CD8-positive, alpha-beta memory T cell (primary cell): ENCODE measurements at regions of chr22 and their contacts with region 1.

Region 1: GRCh38 chr22:22884010-22884887 is 3.4 kb upstream of the IGLL5 start:
- DNase-seq: peak; percentile 44 to 81 (median 70)
- H3K4me3 ChIP-seq: no peak overlapping the region
- H3K4me3 Mint-ChIP-seq: no peak overlapping the region
- H3K27ac ChIP-seq: no peak overlapping the region
- H3K27ac Mint-ChIP-seq: peak overlapping the region in 4 of 8 donors; percentile 4 to 77 (median 40)
- H3K4me1 ChIP-seq: no peaks in the 10 kb centered on the region
- H3K4me1 Mint-ChIP-seq: peaks cover 8 to 14% (median 13%) of the 10 kb centered on the region in 3 donors
- H3K27me3 ChIP-seq: no peaks in the 10 kb centered on the region
- H3K27me3 Mint-ChIP-seq: peaks cover 2 to 6% of the 10 kb centered on the region in 2 donors

Region 2: GRCh38 chr22:22692707-22693530 is 191.3 kb before region 1 on chr22:
- CTCF ChIA-PET with region 1: interaction called, 13 read pairs
- POLR2A ChIA-PET with region 1: no interaction called
- DNase-seq: peak; percentile 43 to 76 (median 49)
- H3K4me3 ChIP-seq: no peak overlapping the region
- H3K4me3 Mint-ChIP-seq: no peak overlapping the region
- H3K27ac ChIP-seq: no peak overlapping the region
- H3K27ac Mint-ChIP-seq: peak overlapping the region in 3 of 8 donors; percentile 48 to 90 (median 72)
- H3K4me1 ChIP-seq: no peaks in the 10 kb centered on the region
- H3K4me1 Mint-ChIP-seq: no peaks in the 10 kb centered on the region
- H3K27me3 ChIP-seq: no peaks in the 10 kb centered on the region
- H3K27me3 Mint-ChIP-seq: peaks cover 0 to 3% of the 10 kb centered on the region in 2 donors

Region 3: GRCh38 chr22:22720201-22720723 is 164.0 kb before region 1 on chr22:
- CTCF ChIA-PET with region 1: interaction called, 25 read pairs
- POLR2A ChIA-PET with region 1: no interaction called
- DNase-seq: peak; percentile 20 to 78 (median 37)
- H3K4me3 ChIP-seq: no peak overlapping the region
- H3K4me3 Mint-ChIP-seq: peak overlapping the region in 6 of 7 donors; percentile 34 to 66 (median 54)
- H3K27ac ChIP-seq: peak overlapping the region; percentile 4
- H3K27ac Mint-ChIP-seq: peak overlapping the region; percentile 85 to 97 (median 91)
- H3K4me1 ChIP-seq: peaks cover 26% of the 10 kb centered on the region
- H3K4me1 Mint-ChIP-seq: peaks cover 50 to 56% (median 56%) of the 10 kb centered on the region in 3 donors
- H3K27me3 ChIP-seq: no peaks in the 10 kb centered on the region
- H3K27me3 Mint-ChIP-seq: no peaks in the 10 kb centered on the region

Region 4: DNA sequence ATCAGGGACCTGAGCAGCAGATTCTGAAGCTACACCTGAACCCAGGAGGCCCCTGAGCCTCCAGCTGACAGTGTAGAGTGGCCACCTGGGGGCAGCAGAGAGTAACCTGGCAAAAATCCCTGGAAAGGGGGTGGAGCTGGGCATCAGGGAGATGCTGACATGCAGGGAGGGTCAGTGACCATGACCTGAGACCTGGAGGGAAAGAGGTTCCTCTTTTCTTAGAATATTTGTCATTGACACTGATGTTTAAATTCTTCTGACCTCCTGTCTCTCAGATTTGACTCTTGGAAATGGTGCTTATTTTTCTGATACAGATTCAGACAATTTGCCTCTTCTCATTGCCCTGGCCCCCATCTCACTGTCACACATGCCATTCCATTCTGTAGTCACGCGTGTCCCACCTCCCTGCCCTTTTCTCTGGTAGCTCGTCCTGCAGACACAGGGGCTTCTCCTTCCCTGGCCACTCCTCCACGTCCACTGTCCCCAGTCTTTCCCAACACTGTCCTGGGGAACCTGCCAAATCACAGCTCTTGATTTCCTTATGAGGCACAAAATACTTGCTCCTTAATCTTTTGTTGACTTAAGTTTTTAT is 113.9 kb before region 1 on chr22:
- CTCF ChIA-PET with region 1: interaction called, 22 read pairs
- POLR2A ChIA-PET with region 1: interaction called, 3 read pairs
- DNase-seq: peak; percentile 25 to 62 (median 31)
- H3K4me3 ChIP-seq: no peak overlapping the region
- H3K4me3 Mint-ChIP-seq: peak overlapping the region in 2 of 7 donors; percentile 0 to 15
- H3K27ac ChIP-seq: no peak overlapping the region
- H3K27ac Mint-ChIP-seq: peak overlapping the region; percentile 76 to 91 (median 84)
- H3K4me1 ChIP-seq: peaks cover 4% of the 10 kb centered on the region
- H3K4me1 Mint-ChIP-seq: peaks cover 72 to 97% (median 84%) of the 10 kb centered on the region in 3 donors
- H3K27me3 ChIP-seq: no peaks in the 10 kb centered on the region
- H3K27me3 Mint-ChIP-seq: no peaks in the 10 kb centered on the region

Region 5: DNA sequence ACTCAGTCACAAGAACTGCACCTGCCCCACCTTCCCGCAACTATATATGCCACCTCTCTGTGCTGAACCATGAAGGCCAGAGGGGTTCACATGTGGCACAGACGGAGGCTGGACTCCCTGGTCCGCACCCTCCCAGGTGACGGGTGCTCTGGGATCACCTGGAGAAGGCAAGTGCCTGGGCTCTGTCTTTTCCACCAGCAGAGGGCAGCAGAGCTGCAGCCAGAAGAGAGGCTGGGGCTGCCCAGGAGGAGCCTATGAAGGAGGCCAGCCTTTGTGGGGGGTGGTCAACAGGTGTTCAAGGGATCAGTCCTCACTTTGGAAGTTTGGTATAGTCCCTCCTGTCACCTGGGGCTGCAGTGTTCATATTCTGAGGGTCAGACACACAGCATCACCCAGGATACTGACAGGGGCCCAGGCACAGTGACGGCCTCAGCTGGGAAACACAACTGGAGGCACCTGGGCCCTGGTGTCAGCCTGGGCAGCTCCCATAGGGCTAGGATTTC is 35.8 kb before region 1 on chr22:
- CTCF ChIA-PET with region 1: interaction called, 33 read pairs
- POLR2A ChIA-PET with region 1: no interaction called
- DNase-seq: peak; percentile 49 to 83 (median 59)
- H3K4me3 ChIP-seq: no peak overlapping the region
- H3K4me3 Mint-ChIP-seq: peak overlapping the region in 3 of 7 donors; percentile 27 to 74 (median 38)
- H3K27ac ChIP-seq: no peak overlapping the region
- H3K27ac Mint-ChIP-seq: peak overlapping the region in 4 of 8 donors; percentile 47 to 67 (median 66)
- H3K4me1 ChIP-seq: peaks cover 10% of the 10 kb centered on the region
- H3K4me1 Mint-ChIP-seq: peaks cover 56 to 67% (median 65%) of the 10 kb centered on the region in 3 donors
- H3K27me3 ChIP-seq: no peaks in the 10 kb centered on the region
- H3K27me3 Mint-ChIP-seq: no peaks in the 10 kb centered on the region